Ascending aorta (tissue), 2 donors: ENCODE measurements at regions of chr5 and their contacts with region 1.

Region 1: DNA sequence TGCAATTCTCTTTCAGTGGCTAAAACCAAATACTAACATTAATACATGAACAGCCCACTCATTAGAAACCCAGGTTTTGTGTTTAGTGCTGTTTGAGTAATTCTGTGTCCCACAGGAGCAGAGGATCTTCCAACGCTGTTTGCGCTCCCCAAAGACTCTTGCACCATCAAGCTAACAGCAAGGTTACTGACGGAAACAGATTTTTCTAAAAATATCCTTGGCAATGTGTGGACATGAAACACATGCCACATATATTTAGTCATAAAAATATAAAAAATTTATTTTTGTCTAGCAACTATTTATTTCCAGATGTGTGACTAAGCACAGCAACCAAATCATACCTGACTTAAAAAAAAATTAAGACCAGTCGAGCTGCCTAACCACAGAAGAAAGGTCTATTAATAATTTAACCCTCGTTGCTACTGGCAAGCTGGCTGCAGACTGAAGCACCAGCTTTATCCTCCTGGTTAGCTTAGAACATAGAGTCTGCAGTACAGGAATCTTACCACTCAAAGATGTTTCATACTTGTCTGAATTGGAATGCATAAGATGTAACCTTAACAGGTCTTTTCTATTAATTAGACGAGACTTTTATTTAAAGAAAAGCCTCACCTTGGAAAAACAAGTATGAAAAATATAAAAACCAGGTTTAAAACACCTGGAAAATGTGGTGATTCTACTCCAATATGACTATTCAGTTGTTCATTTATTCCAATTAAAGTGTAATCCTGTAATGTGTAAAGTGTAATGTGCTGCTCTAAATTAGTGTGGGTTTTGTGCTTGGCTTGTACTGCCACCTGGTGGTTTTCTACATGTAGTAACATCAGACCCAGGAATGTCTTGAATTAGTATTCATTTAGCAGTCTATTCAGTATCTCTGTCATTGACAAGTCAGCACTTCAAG is 272.5 kb downstream of the EPB41L4A start:
- DNase-seq: peak in 1 of 2 donors; percentile 77
- H3K4me3 ChIP-seq: no peak overlapping the region
- H3K27ac ChIP-seq: peak overlapping the region; percentile 51 to 59
- H3K4me1 ChIP-seq: no peaks in the 10 kb centered on the region
- H3K27me3 ChIP-seq: no peaks in the 10 kb centered on the region
- CTCF ChIP-seq: peak; percentile 82 to 88 (median 85)

Region 2: GRCh38 chr5:110738812-110739651 is 1407.5 kb before region 1 on chr5 and contains the start of gene SLC25A46:
- intact Hi-C with region 1: loop called (anchors 10 kb)
- DNase-seq: peak; percentile 63 to 94
- H3K4me3 ChIP-seq: peak within 1 kb of the TSS; percentile 85 to 98
- H3K27ac ChIP-seq: peak within 1 kb of the TSS; percentile 78 to 87
- H3K4me1 ChIP-seq: peaks cover 2 to 3% of the 10 kb centered on the region in 2 donors
- H3K27me3 ChIP-seq: no peaks in the 10 kb centered on the region
- CTCF ChIP-seq: no peak
- total RNA-seq, gene SLC25A46: 22.1 TPM

Region 3: DNA sequence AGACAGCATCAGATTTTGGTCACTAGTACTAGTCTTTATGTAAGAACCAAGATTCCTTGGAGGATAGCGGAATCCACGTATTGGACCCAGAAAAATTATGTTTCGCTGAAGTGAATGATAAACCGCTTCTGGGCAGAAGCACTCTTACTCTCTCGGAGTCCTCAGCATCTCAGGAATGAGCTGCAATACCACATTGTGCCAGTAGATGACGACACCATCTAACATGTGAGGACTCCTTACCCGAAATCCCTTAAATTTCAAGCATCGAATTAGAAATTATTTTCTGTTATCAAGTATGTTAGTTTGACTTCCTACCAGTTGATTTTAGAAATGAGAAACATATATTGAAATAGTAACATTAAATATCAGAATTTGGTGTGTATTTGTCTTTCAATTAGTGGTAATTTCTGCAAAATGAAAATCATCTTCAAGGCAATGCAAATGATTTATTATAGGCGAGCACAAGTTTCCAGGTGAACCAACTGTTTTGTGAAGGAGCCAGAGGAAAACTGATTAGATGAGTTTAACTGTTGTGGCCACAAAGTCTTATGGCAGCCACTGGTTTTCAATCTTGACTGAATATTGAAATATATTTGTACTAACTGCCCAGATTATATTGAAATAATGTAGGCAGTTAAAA is 988.4 kb before region 1 on chr5:
- intact Hi-C with region 1: loop called (anchors 5 kb)
- DNase-seq: peak in 1 of 2 donors; percentile 78
- H3K4me3 ChIP-seq: no peak overlapping the region
- H3K27ac ChIP-seq: no peak overlapping the region
- H3K4me1 ChIP-seq: no peaks in the 10 kb centered on the region
- H3K27me3 ChIP-seq: no peaks in the 10 kb centered on the region
- CTCF ChIP-seq: peak; percentile 75 to 99 (median 96)

Region 4: GRCh38 chr5:111530298-111530740 is 616.3 kb before region 1 on chr5:
- intact Hi-C with region 1: loop called (anchors 1 kb)
- DNase-seq: peak; percentile 57 to 86
- H3K4me3 ChIP-seq: no peak overlapping the region
- H3K27ac ChIP-seq: no peak overlapping the region
- H3K4me1 ChIP-seq: peaks cover 0 to 2% of the 10 kb centered on the region in 2 donors
- H3K27me3 ChIP-seq: no peaks in the 10 kb centered on the region
- CTCF ChIP-seq: no peak

Region 5: DNA sequence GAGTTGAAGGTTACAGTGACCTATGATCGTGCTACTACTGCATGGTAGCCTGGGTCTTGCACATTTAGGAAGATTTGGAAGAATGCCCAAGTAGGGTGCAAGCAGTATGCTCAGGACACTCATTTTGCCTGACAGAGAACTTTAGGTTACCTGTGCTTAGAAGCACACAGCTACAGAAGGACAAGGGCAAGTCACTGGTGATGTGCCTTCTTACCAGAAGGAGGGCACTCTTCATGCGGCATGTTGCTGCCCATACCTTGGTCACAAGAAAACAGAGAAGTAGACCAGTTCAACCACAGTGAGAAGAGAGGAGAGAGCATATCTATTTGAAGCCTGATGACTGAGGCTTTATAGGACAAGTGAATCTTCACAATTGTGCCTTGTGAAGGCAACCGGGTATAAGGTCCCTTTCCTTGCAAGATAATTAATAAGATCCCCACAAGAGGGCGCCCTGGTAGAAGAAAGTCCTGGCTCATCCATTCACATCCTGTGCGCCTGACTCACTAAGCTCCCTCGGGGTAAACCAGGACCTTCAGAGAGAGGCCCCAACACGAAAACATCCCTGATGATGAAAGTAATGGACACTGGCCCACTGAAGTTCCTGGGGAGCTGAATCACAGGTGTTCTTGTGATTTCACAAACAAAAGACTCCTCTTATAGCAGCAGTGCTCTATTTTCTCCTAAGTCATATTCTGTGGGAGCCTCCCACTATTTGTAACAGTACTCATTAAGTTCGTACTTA is 596.1 kb before region 1 on chr5:
- intact Hi-C with region 1: loop called (anchors 1 kb)
- DNase-seq: peak; percentile 48 to 95
- H3K4me3 ChIP-seq: no peak overlapping the region
- H3K27ac ChIP-seq: no peak overlapping the region
- H3K4me1 ChIP-seq: peaks cover 0 to 4% of the 10 kb centered on the region in 2 donors
- H3K27me3 ChIP-seq: no peaks in the 10 kb centered on the region
- CTCF ChIP-seq: peak; percentile 53 to 76 (median 75)

Region 6: DNA sequence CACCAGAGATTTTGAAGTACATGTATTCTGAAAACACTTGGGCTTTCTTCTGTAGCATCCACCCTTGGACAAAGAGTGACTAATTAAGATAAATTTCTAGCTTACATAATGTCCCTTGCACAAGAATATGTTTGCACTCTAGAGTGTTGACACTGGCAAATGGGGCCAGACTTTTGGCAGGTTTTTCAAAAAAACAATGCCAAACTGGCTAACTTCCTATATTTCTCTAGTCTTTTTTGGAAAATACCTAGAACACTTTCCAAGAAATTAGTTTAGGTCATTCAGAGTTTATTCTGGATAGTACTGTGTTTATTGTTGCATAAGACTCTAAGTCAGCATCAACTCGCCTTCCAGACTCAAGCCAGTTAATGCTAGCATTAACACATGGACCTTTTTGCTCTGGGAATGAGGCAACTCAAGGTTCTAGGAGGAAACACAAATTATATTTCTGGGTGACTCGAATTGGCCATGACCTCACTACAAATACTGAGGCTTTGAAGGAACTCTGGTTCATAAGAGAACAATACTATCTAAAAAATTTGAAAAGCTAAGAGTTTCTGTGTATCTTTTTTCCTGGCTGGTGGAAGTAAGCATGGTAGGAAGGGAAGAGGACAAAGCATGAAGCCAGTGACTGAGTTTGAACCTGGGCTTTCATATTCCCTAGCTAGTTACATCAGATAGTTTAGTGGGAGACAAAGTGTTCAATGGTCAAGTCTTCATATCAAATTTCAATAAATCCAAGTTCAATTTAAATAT is 491.2 kb before region 1 on chr5:
- intact Hi-C with region 1: loop called (anchors 10 kb)
- DNase-seq: peak in 1 of 2 donors; percentile 69
- H3K4me3 ChIP-seq: no peak overlapping the region
- H3K27ac ChIP-seq: peak overlapping the region in 1 of 2 donors; percentile 49
- H3K4me1 ChIP-seq: peaks cover 0 to 5% of the 10 kb centered on the region in 2 donors
- H3K27me3 ChIP-seq: no peaks in the 10 kb centered on the region
- CTCF ChIP-seq: no peak

Region 7: DNA sequence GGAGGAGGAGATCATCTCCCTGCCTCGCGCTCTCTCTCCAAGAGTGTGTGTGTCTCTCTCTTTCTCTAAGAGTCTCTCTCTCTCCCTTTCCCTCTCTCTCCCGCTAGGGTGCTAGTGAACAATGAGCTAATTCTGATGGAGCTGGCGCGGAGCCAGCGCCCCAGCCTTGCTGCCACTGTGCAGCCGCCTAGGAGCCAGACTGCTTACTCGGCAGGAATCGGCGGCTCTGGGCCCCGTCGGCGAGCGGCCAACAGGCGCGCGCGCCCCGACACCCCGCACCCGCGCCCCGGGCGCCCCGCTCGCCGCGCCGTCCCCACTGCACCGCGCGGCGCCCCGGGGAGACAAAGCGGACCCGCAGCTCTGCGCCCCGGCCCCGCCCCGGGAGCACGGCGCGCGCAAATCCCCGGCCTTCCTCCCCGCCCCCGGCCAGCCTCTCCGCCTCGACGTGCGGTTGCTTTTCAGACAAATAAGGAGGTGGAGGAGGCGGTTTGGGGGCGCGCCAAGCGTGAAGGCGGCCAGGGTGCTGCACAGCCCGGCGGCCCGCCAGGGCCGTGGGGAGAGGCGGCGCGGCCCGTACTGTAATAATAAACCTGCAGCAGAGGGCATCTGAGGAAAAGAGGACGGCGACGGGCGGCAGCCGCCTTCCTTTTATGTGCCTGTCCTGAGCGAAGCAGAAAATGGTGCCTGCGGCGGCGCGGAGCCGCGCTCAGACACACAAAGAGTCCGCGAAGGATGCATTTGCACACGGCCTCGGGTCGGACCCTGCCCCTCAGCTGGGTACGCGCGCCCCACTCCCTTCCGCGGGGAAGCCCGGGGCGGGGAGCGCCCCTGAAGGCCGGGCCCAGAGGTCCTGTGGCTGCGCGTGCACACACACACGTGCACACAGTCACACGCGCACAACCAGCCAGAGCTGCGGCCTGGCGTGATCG is 389.0 kb before region 1 on chr5:
- intact Hi-C with region 1: loop called (anchors 5 kb)
- DNase-seq: peak; percentile 73 to 95
- H3K4me3 ChIP-seq: peak overlapping the region; percentile 50 to 72
- H3K27ac ChIP-seq: peak overlapping the region; percentile 59 to 76
- H3K4me1 ChIP-seq: peaks cover 0 to 14% of the 10 kb centered on the region in 2 donors
- H3K27me3 ChIP-seq: no peaks in the 10 kb centered on the region
- CTCF ChIP-seq: peak; percentile 28 to 46 (median 33)